AG04450 (cell line): ENCODE measurements at regions of chr10 and their contacts with region 1.

Region 1: GRCh38 chr10:112397592-112397991 is 23.7 kb downstream of the ACSL5 start:
- DNase-seq: no peak
- H3K4me3 ChIP-seq: no peak overlapping the region
- H3K27ac ChIP-seq: no peak overlapping the region
- H3K27me3 ChIP-seq: peaks cover 2% of the 10 kb centered on the region
- CTCF ChIP-seq: no peak

Region 2: DNA sequence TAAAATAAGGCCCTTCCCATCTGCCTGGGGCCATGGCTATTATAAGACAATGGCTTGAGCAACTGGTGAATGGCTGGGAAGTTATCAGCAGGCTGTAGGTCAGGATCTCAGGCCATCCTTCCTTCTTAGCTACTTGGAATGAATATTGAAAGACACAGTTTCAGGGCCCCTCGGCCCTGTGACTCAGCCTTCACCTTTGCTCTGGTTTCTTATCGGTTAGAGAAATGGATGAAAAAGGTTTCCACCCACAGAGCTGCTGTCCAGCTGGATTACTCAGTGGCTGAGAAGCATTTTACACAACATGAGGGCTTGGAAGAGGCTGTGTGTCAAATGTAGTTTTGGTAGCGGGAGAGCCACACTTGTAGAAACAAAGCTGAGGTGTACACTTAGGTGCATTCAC is 14.3 kb before region 1 on chr10:
- CTCF ChIA-PET with region 1: no interaction called
- POLR2A ChIA-PET with region 1: no interaction called
- DNase-seq: peak; percentile 21
- H3K4me3 ChIP-seq: no peak overlapping the region
- H3K27ac ChIP-seq: no peak overlapping the region
- H3K27me3 ChIP-seq: no peaks in the 10 kb centered on the region
- CTCF ChIP-seq: no peak

Region 3: DNA sequence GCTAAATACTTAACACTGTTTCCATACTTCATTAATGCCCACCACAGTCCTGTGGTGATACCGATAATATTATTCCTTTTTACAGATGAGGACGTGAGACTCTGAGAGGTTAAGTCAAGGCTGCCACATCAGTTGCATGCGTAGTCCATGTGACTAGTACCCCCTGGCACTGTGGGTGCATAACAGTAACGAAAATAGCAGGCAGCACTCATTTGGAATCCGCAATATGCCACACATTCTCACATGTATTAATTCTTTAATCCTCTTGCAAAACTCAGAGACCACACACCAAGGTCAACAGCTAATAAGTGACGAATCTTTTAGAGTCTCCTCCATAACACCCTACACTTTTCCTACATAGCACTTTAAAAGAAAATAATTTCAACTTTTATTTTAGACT is 1055.8 kb after region 1 on chr10:
- CTCF ChIA-PET with region 1: interaction called, 10 read pairs
- POLR2A ChIA-PET with region 1: no interaction called
- DNase-seq: no peak
- H3K4me3 ChIP-seq: no peak overlapping the region
- H3K27ac ChIP-seq: no peak overlapping the region
- H3K27me3 ChIP-seq: peaks cover 7% of the 10 kb centered on the region
- CTCF ChIP-seq: no peak